H1 (cell line): ENCODE measurements at regions of chr15 and their contacts with region 1.

Region 1: DNA sequence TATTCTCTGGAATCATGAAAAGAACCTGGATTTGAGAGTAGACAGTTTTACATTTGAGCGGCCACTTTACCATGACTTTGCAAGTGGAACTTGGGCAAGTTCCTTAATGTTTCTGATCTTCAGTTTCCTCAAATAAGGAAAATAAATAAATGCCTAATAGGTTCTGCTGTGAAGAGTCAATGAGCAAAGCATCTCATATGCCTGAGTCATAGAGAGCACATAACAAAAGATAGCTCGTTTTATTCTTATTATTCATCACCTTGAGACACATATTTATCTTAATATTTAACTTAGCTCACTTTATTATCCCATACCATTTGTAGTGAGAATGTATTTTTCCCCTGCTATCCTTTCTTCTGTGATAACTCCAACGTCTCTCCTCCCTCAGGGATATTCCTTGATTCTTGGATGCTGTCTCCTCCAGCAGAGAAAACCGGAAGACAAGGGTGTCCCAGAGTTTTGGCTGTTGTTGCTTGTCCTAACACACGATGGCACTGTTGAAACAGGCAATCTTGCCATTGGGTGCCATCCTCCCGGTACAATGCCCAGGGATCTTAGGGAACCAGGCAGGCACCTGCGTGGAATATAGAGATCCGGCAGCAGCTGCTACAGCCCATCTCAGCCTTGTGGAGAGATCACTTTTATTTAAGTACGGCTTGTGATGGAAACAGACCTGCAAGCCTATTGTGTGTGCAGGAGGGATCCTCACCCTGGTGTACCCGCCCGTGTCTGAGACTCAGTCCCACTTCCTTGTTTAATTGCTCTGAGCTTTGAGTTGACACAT is 33.3 kb upstream of the VPS33B start:
- DNase-seq: peak; percentile 49 to 72
- H3K4me3 ChIP-seq: no peak overlapping the region
- H3K27ac ChIP-seq: no peak overlapping the region
- H3K4me1 ChIP-seq: no peaks in the 10 kb centered on the region
- H3K27me3 ChIP-seq: no peaks in the 10 kb centered on the region
- CTCF ChIP-seq: peak; percentile 77 to 96 (median 89)
- EP300 ChIP-seq: no peak
- POLR2A ChIP-seq: no peak
- RAD21 ChIP-seq: peak; percentile 98 to 99

Region 2: DNA sequence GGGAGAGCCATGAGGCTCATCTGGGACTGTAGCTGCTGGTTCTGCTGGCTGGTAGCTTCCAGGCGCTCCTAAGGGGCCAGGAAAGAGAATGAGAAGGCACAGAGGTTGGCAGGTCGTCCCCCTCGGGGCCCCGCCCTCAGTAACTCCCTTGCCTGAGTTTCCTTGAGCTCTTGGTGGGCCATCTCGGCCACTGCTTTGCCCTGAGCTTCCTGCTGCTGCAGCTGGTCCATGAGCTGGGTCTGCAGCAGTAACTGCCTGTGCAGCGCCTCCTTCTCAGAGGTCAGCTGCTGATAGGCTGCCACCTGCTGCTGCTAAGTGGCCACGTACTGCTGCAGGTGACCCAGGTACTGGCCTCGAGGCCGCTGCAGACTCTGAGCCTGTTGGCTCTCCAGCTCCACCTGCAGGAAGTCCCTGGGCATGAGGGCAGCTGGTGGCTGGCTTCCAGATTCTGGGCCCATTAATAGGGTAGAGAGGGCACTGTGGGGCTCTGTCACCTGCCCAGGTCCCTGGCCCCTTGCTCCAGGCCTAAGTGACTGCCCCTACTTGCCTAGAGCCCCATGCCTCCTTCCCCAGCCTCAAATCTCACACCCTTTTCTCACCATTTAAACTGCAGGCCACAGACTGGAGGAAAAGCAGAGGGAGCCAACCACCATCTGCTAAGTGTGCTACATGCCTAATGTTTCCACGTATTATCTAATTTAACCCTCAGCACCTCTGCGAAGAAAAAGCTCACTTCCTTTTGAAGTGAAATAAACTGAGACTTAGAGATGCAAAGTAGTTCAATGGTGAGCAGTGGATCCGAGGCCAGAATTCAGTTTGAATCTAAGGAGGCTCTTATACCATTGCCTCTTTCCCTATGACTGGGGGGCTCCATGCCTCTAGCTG is 22.6 kb before region 1 on chr15:
- CTCF ChIA-PET with region 1: interaction called, 14 read pairs
- POLR2A ChIA-PET with region 1: no interaction called
- DNase-seq: peak; percentile 82 to 94
- H3K4me3 ChIP-seq: 0 out of 8 replicates have a peak overlapping the region, but pooled peaks of 1 of the 4 experiments have one; percentile 7
- H3K27ac ChIP-seq: no peak overlapping the region
- H3K4me1 ChIP-seq: peaks cover 0 to 3% (median 1%) of the 10 kb centered on the region in 4 experiments; a peak in 3 of 7 replicates
- H3K27me3 ChIP-seq: no peaks in the 10 kb centered on the region; a peak in 1 of 7 replicates
- CTCF ChIP-seq: peak; percentile 75 to 88 (median 87)
- EP300 ChIP-seq: no peak
- POLR2A ChIP-seq: no peak
- RAD21 ChIP-seq: peak; percentile 65 to 74

Region 3: GRCh38 chr15:91067026-91067425 is 11.3 kb after region 1 on chr15:
- CTCF ChIA-PET with region 1: interaction called, 47 read pairs
- POLR2A ChIA-PET with region 1: no interaction called
- DNase-seq: no peak
- H3K4me3 ChIP-seq: no peak overlapping the region
- H3K27ac ChIP-seq: no peak overlapping the region
- H3K4me1 ChIP-seq: no peaks in the 10 kb centered on the region
- H3K27me3 ChIP-seq: no peaks in the 10 kb centered on the region; a peak in 1 of 7 replicates
- CTCF ChIP-seq: no peak
- EP300 ChIP-seq: no peak
- POLR2A ChIP-seq: no peak
- RAD21 ChIP-seq: no peak

Region 4: DNA sequence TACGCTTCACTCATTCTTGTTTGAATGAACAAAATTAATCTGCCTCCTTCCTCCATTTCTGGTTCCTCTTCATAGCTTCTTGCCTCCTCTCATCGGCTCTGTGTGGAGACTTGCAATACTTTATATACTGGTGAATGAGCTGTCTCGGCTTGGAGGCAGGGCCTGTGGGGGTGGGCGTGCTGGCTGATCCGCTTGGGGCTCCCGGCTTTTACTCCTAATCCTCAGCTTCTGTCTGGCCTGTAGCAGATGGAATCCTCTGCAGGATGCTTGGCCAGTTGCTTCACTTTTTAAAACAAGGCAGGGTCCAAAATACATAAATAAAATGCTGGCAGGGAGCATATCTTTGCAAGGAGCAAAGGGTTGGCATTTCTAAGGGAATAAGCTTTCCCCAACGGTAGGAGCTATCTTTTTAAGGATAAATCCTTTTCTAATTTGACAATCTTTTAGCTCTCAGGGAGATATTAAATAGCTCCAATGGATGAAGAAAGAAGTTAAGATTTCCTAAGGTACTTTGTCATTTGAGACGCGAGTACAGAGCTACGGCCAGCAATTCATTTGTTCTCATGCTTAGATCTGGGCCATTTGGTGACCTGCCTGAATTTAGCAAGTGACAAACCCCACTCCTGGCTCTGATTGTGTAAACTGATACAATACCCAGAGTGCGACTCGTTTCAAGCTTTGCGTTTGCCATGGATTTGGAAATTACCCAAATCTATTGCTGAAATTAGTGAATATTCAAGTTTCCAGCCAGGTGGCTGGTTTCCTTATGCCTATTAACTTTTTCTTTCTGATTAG is 63.3 kb after region 1 on chr15:
- CTCF ChIA-PET with region 1: interaction called, 10 read pairs
- POLR2A ChIA-PET with region 1: no interaction called
- DNase-seq: no peak
- H3K4me3 ChIP-seq: no peak overlapping the region
- H3K27ac ChIP-seq: no peak overlapping the region
- H3K4me1 ChIP-seq: no peaks in the 10 kb centered on the region
- H3K27me3 ChIP-seq: no peaks in the 10 kb centered on the region
- CTCF ChIP-seq: no peak
- EP300 ChIP-seq: no peak
- POLR2A ChIP-seq: no peak
- RAD21 ChIP-seq: no peak

Region 5: DNA sequence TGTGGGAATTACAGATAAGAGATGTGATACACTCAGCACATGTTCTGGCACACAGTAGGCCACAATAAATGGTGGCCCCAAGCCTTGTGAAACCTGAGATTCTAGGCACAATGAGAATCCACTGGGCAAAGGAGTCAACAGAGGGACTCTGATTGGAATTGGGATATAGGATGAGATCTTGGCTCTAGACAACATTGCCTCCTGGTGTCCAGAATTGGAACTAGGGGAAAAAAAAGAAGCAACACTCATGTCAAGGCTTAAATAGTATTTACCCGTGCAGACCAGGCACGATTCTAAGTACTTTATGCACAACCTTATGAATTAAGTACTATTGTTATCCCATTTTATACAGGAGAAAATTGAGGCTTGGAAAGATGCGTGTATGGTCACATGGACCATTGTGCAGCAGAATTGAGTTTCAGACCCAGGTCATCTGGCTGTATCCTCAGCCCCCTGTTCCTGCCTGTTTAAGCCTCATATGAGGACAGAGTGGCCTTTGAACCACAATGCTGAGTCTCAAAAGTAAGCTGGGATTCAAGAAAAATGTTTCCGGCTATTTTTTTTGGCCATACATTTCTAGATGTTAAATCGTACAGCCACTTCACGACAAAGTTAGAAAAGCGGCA is 169.1 kb after region 1 on chr15:
- CTCF ChIA-PET with region 1: interaction called, 145 read pairs
- POLR2A ChIA-PET with region 1: no interaction called
- DNase-seq: peak in 1 of 2 experiments; percentile 61
- H3K4me3 ChIP-seq: no peak overlapping the region
- H3K27ac ChIP-seq: no peak overlapping the region
- H3K4me1 ChIP-seq: 0 out of 7 replicates have a peak, but pooled peaks cover 0 to 3% (median 0%) of the 10 kb centered on the region in 4 experiments
- H3K27me3 ChIP-seq: no peaks in the 10 kb centered on the region
- CTCF ChIP-seq: peak in 2 of 3 experiments; percentile 80 to 82; a peak in 3 of 4 replicates
- EP300 ChIP-seq: no peak
- POLR2A ChIP-seq: no peak
- RAD21 ChIP-seq: peak; percentile 93 to 94

Region 6: DNA sequence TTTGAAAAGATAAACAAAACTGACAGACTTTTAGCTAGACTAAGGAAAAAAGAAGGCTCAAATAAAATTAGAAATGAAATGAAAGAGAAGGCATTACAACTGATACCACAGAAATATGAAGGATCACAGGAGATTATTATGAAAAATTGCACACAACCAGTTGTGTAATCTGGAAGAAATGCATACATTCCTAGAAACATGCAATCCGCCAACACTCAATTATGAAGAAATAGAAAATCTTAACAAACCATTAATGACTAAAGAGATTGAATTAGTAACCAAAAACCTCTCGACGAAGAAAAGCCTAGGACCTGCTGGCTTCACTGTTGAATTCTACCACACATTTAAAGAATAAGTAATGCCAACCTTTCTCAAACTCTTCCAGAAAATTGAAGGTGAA is 193.9 kb after region 1 on chr15:
- CTCF ChIA-PET with region 1: interaction called, 22 read pairs
- POLR2A ChIA-PET with region 1: no interaction called
- DNase-seq: no peak
- H3K4me3 ChIP-seq: no peak overlapping the region
- H3K27ac ChIP-seq: no peak overlapping the region
- H3K4me1 ChIP-seq: no peaks in the 10 kb centered on the region
- H3K27me3 ChIP-seq: no peaks in the 10 kb centered on the region
- CTCF ChIP-seq: no peak
- EP300 ChIP-seq: no peak
- POLR2A ChIP-seq: no peak
- RAD21 ChIP-seq: no peak

Region 7: DNA sequence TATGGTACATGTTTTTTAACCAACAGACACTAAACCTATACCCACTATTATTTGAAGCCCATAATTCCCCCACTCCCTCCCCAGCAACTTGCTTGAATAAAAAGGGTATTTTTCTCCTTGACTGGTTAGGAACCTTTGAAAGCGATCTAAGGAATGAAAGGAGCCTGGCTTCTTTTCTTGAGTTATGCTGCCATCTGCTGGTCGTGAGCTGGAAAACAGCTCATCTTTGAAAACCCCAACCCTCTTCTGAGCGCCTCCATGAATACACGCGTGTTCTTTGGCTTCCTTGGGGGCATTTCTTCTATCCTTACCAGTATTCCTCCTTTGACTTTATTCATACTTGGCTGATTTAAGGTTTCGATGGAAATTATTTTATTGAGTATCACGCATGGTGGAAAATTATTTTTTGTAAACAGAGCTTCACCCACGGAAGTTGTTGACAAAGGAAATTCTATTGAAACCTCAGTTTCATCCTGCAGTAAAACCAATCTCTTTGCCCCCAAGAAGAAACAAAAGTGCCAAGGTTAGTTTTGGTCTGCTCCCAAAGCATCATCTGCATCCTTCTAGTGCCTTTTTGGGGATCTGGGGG is 215.9 kb after region 1 on chr15:
- CTCF ChIA-PET with region 1: interaction called, 27 read pairs
- POLR2A ChIA-PET with region 1: interaction called, 3 read pairs
- DNase-seq: peak in 1 of 2 experiments; percentile 69
- H3K4me3 ChIP-seq: no peak overlapping the region
- H3K27ac ChIP-seq: no peak overlapping the region
- H3K4me1 ChIP-seq: no peaks in the 10 kb centered on the region
- H3K27me3 ChIP-seq: no peaks in the 10 kb centered on the region
- CTCF ChIP-seq: peak; percentile 25 to 85 (median 76)
- EP300 ChIP-seq: no peak
- POLR2A ChIP-seq: no peak
- RAD21 ChIP-seq: peak; percentile 94 to 97

Region 8: DNA sequence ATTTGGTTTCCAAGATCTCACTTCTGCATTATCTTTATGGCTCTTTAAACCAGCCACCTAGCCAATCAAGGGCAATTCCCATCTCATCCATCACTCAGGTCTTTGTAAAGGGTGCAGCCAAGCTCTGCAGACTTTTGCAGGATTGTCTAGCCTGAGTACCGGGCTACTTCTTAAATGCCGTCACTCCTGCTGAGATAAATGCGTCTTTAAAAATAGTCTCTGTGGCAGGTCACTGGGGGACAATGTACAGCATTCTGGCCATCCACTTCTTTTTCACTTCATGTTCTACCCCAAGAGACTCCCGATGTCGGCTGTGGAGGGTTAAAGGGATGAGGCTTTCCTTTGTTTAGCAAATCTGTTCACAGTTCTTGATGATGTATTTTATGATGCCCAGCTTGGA is 239.1 kb after region 1 on chr15:
- CTCF ChIA-PET with region 1: no interaction called
- POLR2A ChIA-PET with region 1: no interaction called
- DNase-seq: no peak
- H3K4me3 ChIP-seq: no peak overlapping the region
- H3K27ac ChIP-seq: no peak overlapping the region
- H3K4me1 ChIP-seq: 0 out of 7 replicates have a peak, but pooled peaks cover 0 to 2% (median 0%) of the 10 kb centered on the region in 4 experiments
- H3K27me3 ChIP-seq: peaks cover 0 to 2% (median 0%) of the 10 kb centered on the region in 4 experiments; a peak in 1 of 7 replicates
- CTCF ChIP-seq: no peak
- EP300 ChIP-seq: no peak
- POLR2A ChIP-seq: no peak
- RAD21 ChIP-seq: no peak